ENCODE measurements at regions of chr7 and their contacts with region 1.

Region 1: GRCh38 chr7:73623798-73624668 is at the start of gene MLXIPL:
- DNase-seq: no peak
- H3K4me3 ChIP-seq: peak within 1 kb of the TSS; percentile 41
- CTCF ChIP-seq: no peak

Region 2: DNA sequence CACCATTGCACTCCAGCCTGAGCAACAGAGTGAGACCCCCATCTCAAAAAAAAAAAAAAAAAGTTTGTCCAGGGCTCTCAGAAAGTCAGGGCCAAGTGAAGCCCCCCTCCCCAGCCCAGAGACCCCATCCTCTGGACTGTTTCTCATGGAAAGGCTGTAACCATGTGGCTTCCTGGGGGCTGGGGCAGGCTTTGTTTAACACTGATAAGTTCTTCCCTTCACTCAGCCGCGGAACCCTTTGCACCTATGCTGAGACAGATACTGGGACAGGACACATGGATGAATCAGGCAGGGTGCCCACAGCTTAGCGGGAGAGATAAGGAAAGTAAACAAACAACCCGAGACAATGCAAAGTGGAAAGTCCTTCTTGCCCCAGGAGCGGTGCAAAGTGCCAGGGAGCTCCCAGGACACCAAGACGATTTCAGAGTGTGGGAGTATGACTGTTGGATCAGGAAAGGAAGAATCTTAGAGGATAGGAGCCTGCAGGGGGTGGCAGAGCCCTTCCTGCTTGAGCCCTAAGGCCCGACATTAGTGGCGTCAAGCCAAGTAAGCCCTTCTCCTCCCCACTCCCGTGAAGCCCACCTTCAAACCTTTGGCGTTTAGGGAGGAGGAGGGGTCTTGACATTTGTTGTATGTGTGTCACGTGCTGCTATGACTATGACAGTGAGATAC is 11.3 kb before region 1 on chr7:
- CTCF ChIA-PET with region 1: interaction called, 50 read pairs
- POLR2A ChIA-PET with region 1: no interaction called
- DNase-seq: no peak
- H3K4me3 ChIP-seq: no peak overlapping the region
- CTCF ChIP-seq: no peak

Region 3: DNA sequence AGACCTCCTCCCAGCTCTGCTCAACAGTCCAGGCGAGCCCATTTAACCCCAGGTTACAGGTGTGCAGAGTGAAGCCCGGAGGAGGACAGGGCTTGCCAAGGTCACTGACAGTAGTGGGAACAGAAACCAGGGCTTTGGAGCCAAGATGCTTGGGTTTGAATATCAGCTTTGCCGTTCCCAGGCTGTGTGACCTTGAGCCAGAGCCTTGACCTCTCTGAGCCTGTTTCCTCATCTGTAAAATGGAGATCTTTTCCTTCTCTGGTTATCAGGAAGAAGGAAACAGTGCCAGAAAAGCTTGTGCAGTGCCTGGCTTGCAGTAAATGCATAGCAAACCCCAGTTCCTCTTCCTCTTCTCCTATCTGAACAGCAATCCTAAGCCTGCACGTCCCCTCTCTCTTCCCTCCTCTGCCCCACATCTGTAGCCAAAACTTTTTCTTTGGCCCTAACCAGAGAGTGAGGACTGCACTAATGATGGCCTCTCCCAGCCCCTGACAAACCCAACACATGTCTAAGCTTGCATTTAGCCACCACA is 21.7 kb after region 1 on chr7:
- CTCF ChIA-PET with region 1: interaction called, 24 read pairs
- POLR2A ChIA-PET with region 1: no interaction called
- DNase-seq: no peak
- H3K4me3 ChIP-seq: no peak overlapping the region
- CTCF ChIP-seq: no peak

Measured in AG04449 (cell line).